ENCODE measurements at regions of chr3 and their contacts with region 1.

Region 1: GRCh38 chr3:138068579-138069174 is 46.7 kb downstream of the DZIP1L start:
- DNase-seq: peak; percentile 70
- ATAC-seq: peak; percentile 73
- H3K4me3 ChIP-seq: no peak overlapping the region
- H3K4me3 Mint-ChIP-seq: no peak overlapping the region
- H3K27ac ChIP-seq: no peak overlapping the region
- H3K27ac Mint-ChIP-seq: no peak overlapping the region
- H3K4me1 ChIP-seq: no peaks in the 10 kb centered on the region
- H3K4me1 Mint-ChIP-seq: no peaks in the 10 kb centered on the region
- H3K27me3 ChIP-seq: no peaks in the 10 kb centered on the region
- H3K27me3 Mint-ChIP-seq: peaks cover 23% of the 10 kb centered on the region
- CTCF ChIP-seq: peak; percentile 90

Region 2: GRCh38 chr3:138092023-138092422 is 23.3 kb after region 1 on chr3:
- CTCF ChIA-PET with region 1: no interaction called
- POLR2A ChIA-PET with region 1: no interaction called
- intact Hi-C with region 1: no loop called
- DNase-seq: no peak
- ATAC-seq: no peak
- H3K4me3 ChIP-seq: no peak overlapping the region
- H3K4me3 Mint-ChIP-seq: no peak overlapping the region
- H3K27ac ChIP-seq: no peak overlapping the region
- H3K27ac Mint-ChIP-seq: no peak overlapping the region
- H3K4me1 ChIP-seq: no peaks in the 10 kb centered on the region
- H3K4me1 Mint-ChIP-seq: no peaks in the 10 kb centered on the region
- H3K27me3 ChIP-seq: peaks cover 0 to 3% (median 0%) of the 10 kb centered on the region in 4 experiments
- H3K27me3 Mint-ChIP-seq: peaks cover 16% of the 10 kb centered on the region
- CTCF ChIP-seq: no peak

Region 3: DNA sequence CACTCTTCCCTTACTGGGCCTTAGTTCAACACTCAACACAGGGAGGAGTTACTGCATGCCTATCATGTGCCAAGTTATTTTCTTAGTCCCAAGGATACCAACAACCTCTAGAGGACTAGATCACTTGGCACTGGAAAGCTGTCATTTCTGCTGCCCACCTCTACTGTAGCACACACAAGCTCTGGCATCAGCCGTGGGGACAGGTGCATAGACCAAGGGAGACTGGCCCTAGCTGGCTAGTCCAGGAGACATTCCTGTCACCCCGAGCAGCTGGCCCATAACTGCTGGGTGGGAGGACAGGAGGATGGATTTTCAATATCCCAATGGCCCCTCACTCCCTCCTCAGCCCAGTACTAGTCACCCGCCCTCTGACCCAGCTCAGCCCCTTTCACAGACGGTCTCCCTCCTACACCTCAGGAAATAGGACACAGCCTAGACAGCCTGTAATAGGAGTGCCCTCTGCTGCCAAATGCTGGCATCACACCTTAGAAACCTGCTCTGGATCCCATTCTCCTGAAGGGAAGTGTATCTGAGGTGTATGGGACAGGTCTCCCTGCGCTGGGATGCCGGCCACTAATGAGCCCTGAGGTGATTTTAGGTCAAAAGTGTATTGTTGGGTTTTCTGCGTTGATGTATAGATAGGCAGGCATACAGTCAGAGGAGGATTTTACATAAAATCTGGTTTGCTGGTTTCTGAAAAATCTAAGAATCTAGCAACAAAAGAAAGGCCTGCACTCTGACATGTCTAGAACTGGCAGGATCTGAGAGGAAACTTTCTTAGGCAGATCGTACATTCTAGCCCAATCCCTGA is 50.1 kb after region 1 on chr3:
- CTCF ChIA-PET with region 1: interaction called, 12 read pairs
- POLR2A ChIA-PET with region 1: no interaction called
- intact Hi-C with region 1: loop called (anchors 1 kb)
- DNase-seq: peak; percentile 42
- ATAC-seq: peak; percentile 60
- H3K4me3 ChIP-seq: no peak overlapping the region
- H3K4me3 Mint-ChIP-seq: no peak overlapping the region
- H3K27ac ChIP-seq: no peak overlapping the region
- H3K27ac Mint-ChIP-seq: no peak overlapping the region
- H3K4me1 ChIP-seq: peaks cover 12 to 14% of the 10 kb centered on the region in 2 donors
- H3K4me1 Mint-ChIP-seq: peaks cover 10% of the 10 kb centered on the region
- H3K27me3 ChIP-seq: peaks cover 0 to 26% (median 11%) of the 10 kb centered on the region in 4 experiments
- H3K27me3 Mint-ChIP-seq: peaks cover 32% of the 10 kb centered on the region
- CTCF ChIP-seq: peak; percentile 74

Measured in B cell (primary cell).